WTC11 (cell line): ENCODE measurements at regions of chr13 and their contacts with region 1.

Region 1: DNA sequence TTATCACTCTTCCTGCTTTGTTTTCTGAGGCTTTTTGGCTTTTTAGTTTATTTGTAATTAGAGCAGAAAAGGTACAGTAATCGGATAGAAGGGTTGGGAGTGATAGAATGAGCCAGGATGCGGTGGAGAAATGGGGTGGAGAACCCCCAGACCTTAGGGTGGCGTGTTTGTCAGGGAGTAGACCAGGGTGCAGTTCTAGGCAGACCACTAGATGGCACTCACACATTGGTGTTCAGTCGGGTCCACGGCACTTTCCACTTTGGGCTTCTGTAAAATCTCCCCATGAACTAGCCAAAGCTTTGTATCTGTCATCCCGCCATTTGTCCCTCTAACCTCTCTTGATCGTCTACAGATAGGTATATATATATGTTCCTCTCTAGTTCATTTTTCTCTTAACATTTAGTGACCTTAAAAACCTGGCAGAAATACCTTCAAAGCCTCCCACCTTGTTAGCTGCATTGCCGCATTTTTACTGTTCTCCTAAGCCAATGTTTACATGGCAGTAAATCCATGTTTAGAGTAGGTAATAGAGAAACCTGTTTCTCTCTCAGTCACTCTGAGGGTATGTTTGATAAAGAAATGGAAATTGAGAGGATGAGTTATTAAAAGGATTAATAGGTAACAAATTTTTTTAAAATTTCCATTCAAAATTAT is 154.9 kb downstream of the TM9SF2 start:
- DNase-seq: peak; percentile 92
- ATAC-seq: peak; percentile 72
- H3K4me3 Mint-ChIP-seq: peak overlapping the region; percentile 20; the same call in 1 of the 2 replicates
- H3K27ac Mint-ChIP-seq: peak overlapping the region; percentile 84
- H3K4me1 Mint-ChIP-seq: peaks cover 56% of the 10 kb centered on the region
- H3K27me3 Mint-ChIP-seq: no peaks in the 10 kb centered on the region
- CTCF ChIP-seq: peak; percentile 90

Region 2: DNA sequence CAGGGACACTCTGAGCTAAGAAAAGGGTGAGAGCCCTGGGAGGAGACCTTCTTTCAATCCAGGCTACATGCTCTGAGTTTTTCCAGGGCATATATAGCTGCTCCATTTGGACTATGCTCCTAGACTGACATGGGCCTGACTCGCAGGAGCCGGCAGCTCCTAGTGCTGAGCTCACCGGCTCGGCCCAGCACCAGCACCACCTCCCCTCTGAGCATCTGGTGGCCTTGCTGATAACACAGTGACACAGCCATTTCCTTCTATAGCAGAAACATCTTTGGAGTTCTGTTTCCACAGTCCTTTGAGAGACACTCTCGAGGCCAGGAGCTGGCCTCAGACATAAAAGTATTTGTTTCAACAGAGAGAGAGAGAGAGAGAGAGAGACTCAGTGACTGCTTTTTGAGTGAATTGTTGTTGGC is 29.9 kb after region 1 on chr13:
- CTCF ChIA-PET with region 1: interaction called, 37 read pairs
- POLR2A ChIA-PET with region 1: interaction called, 8 read pairs
- DNase-seq: peak; percentile 38
- ATAC-seq: peak; percentile 11
- H3K4me3 Mint-ChIP-seq: peak overlapping the region; percentile 62
- H3K27ac Mint-ChIP-seq: peak overlapping the region; percentile 100
- H3K4me1 Mint-ChIP-seq: peaks cover 80% of the 10 kb centered on the region
- H3K27me3 Mint-ChIP-seq: peaks cover 15% of the 10 kb centered on the region
- CTCF ChIP-seq: no peak

Region 3: GRCh38 chr13:99743094-99743493 is 86.9 kb after region 1 on chr13:
- CTCF ChIA-PET with region 1: interaction called, 13 read pairs
- POLR2A ChIA-PET with region 1: interaction called, 6 read pairs
- DNase-seq: no peak
- ATAC-seq: no peak
- H3K4me3 Mint-ChIP-seq: no peak overlapping the region
- H3K27ac Mint-ChIP-seq: peak overlapping the region; percentile 47
- H3K4me1 Mint-ChIP-seq: peaks cover 91% of the 10 kb centered on the region
- H3K27me3 Mint-ChIP-seq: no peaks in the 10 kb centered on the region
- CTCF ChIP-seq: no peak

Region 4: GRCh38 chr13:99757756-99758459 is 101.7 kb after region 1 on chr13:
- CTCF ChIA-PET with region 1: no interaction called
- POLR2A ChIA-PET with region 1: no interaction called
- DNase-seq: no peak
- ATAC-seq: no peak
- H3K4me3 Mint-ChIP-seq: no peak overlapping the region
- H3K27ac Mint-ChIP-seq: no peak overlapping the region
- H3K4me1 Mint-ChIP-seq: peaks cover 11% of the 10 kb centered on the region
- H3K27me3 Mint-ChIP-seq: peaks cover 4% of the 10 kb centered on the region; the same call in 1 of the 2 replicates
- CTCF ChIP-seq: no peak

Region 5: DNA sequence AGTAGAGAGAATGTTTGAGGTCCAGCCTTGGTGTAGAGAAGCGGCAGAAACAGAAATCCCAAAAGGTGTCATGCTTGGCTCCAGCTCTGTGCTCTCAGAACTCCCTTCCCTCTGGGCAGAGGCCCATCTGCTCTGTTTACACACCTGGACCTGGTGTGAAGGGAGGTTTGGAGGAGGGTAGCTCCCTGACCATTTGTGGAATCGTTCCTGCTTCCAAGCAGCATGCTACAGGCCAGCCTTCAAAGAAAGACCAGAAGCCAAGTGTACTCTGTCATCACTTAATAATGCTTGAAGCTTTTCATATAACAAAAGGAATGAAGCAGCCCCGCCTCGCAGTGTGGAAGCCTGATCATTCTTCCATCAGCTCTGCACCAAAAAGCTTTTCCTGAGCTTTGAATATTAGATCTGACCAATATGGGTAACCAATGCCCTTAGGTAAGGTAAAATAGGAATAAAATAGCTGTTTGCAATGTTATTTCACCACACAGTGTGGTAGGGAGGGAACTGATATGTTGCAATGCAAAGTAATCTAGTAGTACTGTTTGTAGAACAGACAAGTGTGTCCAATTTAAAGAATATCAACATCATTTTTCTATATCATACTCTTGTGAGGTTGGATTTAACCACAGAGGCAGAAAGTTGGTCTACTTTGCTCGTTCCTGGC is 252.1 kb after region 1 on chr13:
- CTCF ChIA-PET with region 1: interaction called, 13 read pairs
- POLR2A ChIA-PET with region 1: interaction called, 3 read pairs
- DNase-seq: no peak
- ATAC-seq: peak; percentile 35
- H3K4me3 Mint-ChIP-seq: no peak overlapping the region
- H3K27ac Mint-ChIP-seq: no peak overlapping the region
- H3K4me1 Mint-ChIP-seq: peaks cover 40% of the 10 kb centered on the region
- H3K27me3 Mint-ChIP-seq: no peaks in the 10 kb centered on the region
- CTCF ChIP-seq: no peak

Region 6: GRCh38 chr13:99955747-99956472 is 299.7 kb after region 1 on chr13:
- CTCF ChIA-PET with region 1: interaction called, 48 read pairs
- POLR2A ChIA-PET with region 1: interaction called, 4 read pairs
- DNase-seq: peak; percentile 57
- ATAC-seq: peak; percentile 1; the same call in 1 of the 2 replicates
- H3K4me3 Mint-ChIP-seq: peak overlapping the region; percentile 87
- H3K27ac Mint-ChIP-seq: no peak overlapping the region
- H3K4me1 Mint-ChIP-seq: peaks cover 57% of the 10 kb centered on the region
- H3K27me3 Mint-ChIP-seq: peaks cover 69% of the 10 kb centered on the region
- CTCF ChIP-seq: no peak